Activated CD4-positive, alpha-beta memory T cell treated with anti-CD3 and anti-CD28 coated beads, Interleukin-2, amount 10 ng/mL, durations not matched to agents 7 days and 5 days (primary cell): ENCODE measurements at regions of chr16 and their contacts with region 1.

Region 1: GRCh38 chr16:56938422-56939156 is 6.6 kb downstream of the HERPUD1 start:
- DNase-seq: peak; percentile 77
- H3K4me3 Mint-ChIP-seq: peak overlapping the region; percentile 68
- H3K27ac Mint-ChIP-seq: peak overlapping the region; percentile 93
- H3K4me1 Mint-ChIP-seq: peaks cover 84% of the 10 kb centered on the region
- H3K27me3 Mint-ChIP-seq: no peaks in the 10 kb centered on the region

Region 2: DNA sequence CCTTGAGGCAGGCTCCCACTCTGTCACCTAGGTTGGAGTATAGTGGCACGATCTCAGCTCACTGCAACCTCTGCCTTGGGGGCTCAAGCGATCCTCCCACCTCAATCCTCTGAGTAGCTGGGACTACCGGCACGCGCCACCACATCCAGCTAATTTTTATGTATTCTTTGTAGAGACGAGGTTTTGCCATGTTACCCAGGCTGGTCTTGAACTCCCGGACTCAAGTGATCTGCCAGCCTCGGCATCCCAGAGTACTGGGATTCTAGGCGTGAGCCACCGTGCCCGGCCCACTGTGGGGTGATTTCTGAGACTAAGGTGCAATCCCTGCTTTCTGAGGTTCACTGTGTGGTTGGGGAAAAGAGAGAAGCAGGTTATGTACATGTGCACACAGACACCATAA is 85.6 kb before region 1 on chr16:
- CTCF ChIA-PET with region 1: no interaction called
- POLR2A ChIA-PET with region 1: no interaction called
- DNase-seq: no peak
- H3K4me3 Mint-ChIP-seq: no peak overlapping the region
- H3K27ac Mint-ChIP-seq: no peak overlapping the region
- H3K4me1 Mint-ChIP-seq: peaks cover 14% of the 10 kb centered on the region
- H3K27me3 Mint-ChIP-seq: no peaks in the 10 kb centered on the region

Region 3: GRCh38 chr16:56903866-56904265 is 34.7 kb before region 1 on chr16:
- CTCF ChIA-PET with region 1: no interaction called
- POLR2A ChIA-PET with region 1: no interaction called
- DNase-seq: no peak
- H3K4me3 Mint-ChIP-seq: no peak overlapping the region
- H3K27ac Mint-ChIP-seq: no peak overlapping the region
- H3K4me1 Mint-ChIP-seq: peaks cover 12% of the 10 kb centered on the region
- H3K27me3 Mint-ChIP-seq: peaks cover 36% of the 10 kb centered on the region

Region 4: DNA sequence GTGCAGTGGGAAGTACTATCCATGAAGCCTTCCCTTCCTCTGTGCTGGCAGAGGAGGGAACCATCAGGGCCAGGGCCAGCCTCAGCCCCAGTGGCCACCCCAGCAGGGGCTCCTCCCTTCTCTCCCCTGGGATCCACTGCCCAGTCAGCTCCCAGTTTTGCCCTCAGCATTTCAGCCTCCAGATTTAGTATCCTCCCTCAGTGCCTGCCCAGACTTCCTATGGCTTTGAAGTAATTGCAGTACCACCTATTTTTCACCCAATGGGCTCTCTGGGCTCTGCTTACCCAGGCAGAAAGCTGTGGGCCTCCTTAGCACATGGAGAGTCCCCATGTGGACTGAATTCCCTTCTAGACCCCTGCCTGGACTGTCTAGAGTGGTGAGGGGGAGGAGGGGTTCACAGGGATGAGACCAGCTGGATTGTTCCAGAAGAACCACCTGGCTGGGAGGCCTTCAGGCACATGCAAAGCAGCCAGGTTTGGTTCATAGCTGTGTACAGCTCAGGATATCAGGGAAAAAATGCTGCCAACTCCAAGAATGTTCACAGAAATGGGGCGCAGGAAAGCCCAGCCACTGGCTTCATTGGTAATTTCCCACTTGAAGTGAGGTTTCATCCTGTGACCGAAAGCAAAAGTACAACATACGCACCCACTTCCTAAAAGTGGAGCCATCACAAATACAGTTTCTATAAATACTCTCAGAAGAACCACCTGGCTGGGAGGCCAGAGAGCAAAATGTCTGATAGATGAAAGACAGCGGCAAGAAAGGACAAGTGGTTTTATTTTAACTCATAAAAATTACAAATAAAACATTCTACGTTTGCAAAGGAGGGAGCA is 21.8 kb before region 1 on chr16:
- CTCF ChIA-PET with region 1: interaction called, 3 read pairs
- POLR2A ChIA-PET with region 1: interaction called, 100 read pairs
- DNase-seq: peak; percentile 45
- H3K4me3 Mint-ChIP-seq: no peak overlapping the region
- H3K27ac Mint-ChIP-seq: peak overlapping the region; percentile 60
- H3K4me1 Mint-ChIP-seq: peaks cover 32% of the 10 kb centered on the region
- H3K27me3 Mint-ChIP-seq: peaks cover 4% of the 10 kb centered on the region